PC-9 (cell line): ENCODE measurements at regions of chr14 and their contacts with region 1.

Region 1: DNA sequence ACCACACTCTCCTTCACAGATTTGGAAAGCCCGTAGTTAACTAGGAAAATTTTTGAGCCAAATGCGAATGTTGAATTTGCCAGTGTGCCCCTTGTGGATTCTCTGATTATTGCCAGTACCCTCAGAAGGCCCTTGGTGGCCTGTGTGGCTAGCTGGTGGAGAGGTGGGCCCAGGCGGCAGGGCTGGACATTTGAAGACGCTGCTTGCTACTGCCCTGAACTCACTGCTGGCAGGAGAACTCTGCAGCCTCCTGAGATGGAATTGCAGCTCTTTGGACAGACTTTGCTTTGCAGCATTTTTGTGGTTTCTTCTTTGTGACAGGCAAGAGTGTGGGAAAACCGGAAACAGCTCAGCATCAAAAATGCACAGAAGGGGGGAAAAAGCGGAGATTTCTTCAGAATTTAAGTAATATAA is 97.6 kb downstream of the TGFB3 start:
- DNase-seq: peak; percentile 67 to 73
- H3K4me3 ChIP-seq: no peak overlapping the region
- H3K27ac ChIP-seq: 0 out of 2 replicates have a peak overlapping the region, but pooled peaks have one; percentile 2
- H3K4me1 ChIP-seq: peaks cover 37% of the 10 kb centered on the region
- H3K27me3 ChIP-seq: no peaks in the 10 kb centered on the region
- CTCF ChIP-seq: peak; percentile 57

Region 2: DNA sequence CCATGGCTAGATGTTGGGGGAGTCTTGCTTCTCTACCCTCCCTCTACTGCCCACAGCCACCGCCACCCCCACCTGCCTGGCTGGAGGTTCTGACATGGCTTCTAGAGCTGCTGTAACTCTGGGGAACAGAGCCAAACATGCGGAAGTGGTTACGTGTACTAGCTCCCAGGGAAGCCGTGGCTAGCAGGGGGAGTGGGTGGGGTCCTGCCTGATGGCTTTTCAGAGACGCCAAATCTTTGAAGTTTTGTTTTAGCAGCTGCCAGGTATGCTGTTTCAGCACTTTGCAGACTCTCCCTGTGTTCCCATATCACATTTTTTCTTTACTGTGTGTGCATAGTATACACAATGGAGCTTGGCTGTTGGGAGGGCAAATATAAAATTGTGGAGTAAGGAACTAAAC is 52.7 kb before region 1 on chr14:
- CTCF ChIA-PET with region 1: no interaction called
- POLR2A ChIA-PET with region 1: no interaction called
- intact Hi-C with region 1: loop called (anchors 2 kb)
- DNase-seq: peak; percentile 93 to 94
- H3K4me3 ChIP-seq: peak overlapping the region; percentile 29; the same call in 1 of the 2 replicates
- H3K27ac ChIP-seq: peak overlapping the region; percentile 86
- H3K4me1 ChIP-seq: peaks cover 42% of the 10 kb centered on the region
- H3K27me3 ChIP-seq: no peaks in the 10 kb centered on the region
- CTCF ChIP-seq: no peak

Region 3: DNA sequence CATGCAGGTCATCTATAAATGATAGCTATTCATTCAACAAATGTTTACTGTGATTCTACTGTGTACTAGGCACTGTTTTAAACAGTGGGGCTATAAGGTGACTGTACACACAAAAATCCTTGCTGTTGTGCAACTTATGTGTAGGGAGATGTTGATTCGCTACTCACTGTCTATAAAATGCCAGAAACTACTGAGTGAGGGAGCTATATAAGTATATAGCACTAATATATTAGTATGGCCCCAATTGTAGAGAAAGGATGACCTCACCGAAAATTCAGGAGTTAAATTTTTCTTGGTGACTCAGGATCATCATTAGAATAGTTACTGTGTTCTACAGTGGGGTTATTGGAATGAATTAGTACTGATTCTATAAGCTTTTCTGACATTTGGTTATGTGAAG is 19.9 kb before region 1 on chr14:
- CTCF ChIA-PET with region 1: interaction called, 8 read pairs
- POLR2A ChIA-PET with region 1: interaction called, 17 read pairs
- intact Hi-C with region 1: loop called (anchors 2 kb)
- DNase-seq: peak in 1 of 2 experiments; percentile 93
- H3K4me3 ChIP-seq: no peak overlapping the region
- H3K27ac ChIP-seq: peak overlapping the region; percentile 33
- H3K4me1 ChIP-seq: peaks cover 66% of the 10 kb centered on the region
- H3K27me3 ChIP-seq: no peaks in the 10 kb centered on the region
- CTCF ChIP-seq: no peak

Region 4: GRCh38 chr14:75906676-75907280 is 22.6 kb after region 1 on chr14:
- CTCF ChIA-PET with region 1: interaction called, 8 read pairs
- POLR2A ChIA-PET with region 1: interaction called, 11 read pairs
- intact Hi-C with region 1: no loop called
- DNase-seq: peak; percentile 60 to 64
- H3K4me3 ChIP-seq: no peak overlapping the region
- H3K27ac ChIP-seq: no peak overlapping the region
- H3K4me1 ChIP-seq: no peaks in the 10 kb centered on the region
- H3K27me3 ChIP-seq: no peaks in the 10 kb centered on the region
- CTCF ChIP-seq: peak; percentile 100

Region 5: DNA sequence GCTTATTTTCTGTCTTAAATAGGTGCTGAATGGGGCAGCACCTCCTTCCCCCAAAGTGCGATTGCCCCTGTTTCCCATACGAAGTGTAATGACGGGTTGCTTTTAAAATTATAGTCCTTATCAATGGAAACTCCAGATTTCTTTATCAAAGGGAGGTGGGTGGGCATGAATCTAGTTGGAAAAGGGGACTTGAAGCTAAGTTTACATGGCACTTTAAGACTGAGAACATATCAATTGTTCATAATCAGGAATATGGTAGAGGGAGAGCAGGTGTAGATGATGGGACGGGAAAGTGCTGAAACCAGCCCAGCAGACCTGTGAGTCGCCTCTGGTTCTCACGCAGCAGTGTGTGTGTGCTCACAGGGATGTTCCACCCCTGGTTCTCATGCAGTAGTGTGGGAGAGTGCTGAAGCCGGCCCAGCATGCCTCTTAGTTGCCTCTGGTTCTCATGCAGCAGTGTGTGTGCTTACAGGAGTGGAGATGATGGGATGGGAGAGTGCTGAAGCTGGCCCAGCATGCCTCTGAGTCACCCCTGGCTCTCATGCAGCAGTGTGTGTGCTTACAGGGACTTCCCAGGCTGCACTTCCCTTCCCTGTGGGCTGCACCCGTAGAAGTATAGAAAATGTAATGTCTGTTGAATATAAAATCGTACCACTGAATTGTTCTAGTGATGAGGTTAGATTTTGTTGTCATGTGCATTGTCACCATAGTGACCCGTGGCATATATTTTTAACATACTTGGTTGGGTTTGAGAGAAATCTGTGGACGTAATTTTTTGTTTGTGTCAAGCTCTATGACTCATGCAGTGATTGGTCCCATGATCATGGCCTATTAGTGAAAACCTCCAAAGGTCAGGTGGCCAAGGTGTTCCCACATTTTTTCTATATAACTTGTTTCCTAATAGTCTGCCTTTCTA is 319.1 kb after region 1 on chr14:
- CTCF ChIA-PET with region 1: no interaction called
- POLR2A ChIA-PET with region 1: interaction called, 14 read pairs
- intact Hi-C with region 1: no loop called
- DNase-seq: peak; percentile 59 to 66
- H3K4me3 ChIP-seq: no peak overlapping the region
- H3K27ac ChIP-seq: peak overlapping the region; percentile 49
- H3K4me1 ChIP-seq: peaks cover 27% of the 10 kb centered on the region
- H3K27me3 ChIP-seq: no peaks in the 10 kb centered on the region
- CTCF ChIP-seq: no peak